K562 (cell line): ENCODE measurements at regions of chr7 and their contacts with region 1.

Region 1: DNA sequence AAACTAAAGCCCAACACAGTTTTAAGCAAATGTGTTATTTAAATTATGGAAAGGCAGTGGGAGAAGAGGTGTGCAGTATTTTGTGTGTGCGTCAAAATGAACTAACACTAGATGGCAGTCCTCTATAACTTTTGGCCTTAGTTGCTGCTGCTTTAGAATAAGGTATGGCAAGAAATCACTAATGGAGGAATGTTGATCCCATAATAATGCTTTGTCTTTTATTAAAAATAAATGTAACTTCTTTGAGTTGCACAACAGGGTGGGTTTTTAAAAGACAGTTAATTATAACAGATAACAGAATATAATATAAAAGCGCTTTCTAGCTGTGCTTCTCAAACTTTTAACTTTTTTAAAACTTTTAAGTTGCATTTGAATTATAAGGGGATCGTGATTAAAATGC is 56.4 kb downstream of the BBS9 start:
- DNase-seq: peak; percentile 23 to 64 (median 33)
- ATAC-seq: peak; percentile 90
- H3K4me3 ChIP-seq: no peak overlapping the region
- H3K27ac ChIP-seq: no peak overlapping the region
- H3K4me1 ChIP-seq: no peaks in the 10 kb centered on the region
- H3K27me3 ChIP-seq: no peaks in the 10 kb centered on the region
- CTCF ChIP-seq: peak; percentile 57 to 84 (median 71); a peak in 5 of 6 replicates
- EP300 ChIP-seq: no peak
- POLR2A ChIP-seq: no peak
- RAD21 ChIP-seq: peak; percentile 82 to 89

Region 2: GRCh38 chr7:32761451-32762205 is 424.2 kb before region 1 on chr7:
- CTCF ChIA-PET with region 1: no interaction called
- POLR2A ChIA-PET with region 1: no interaction called
- in situ Hi-C with region 1: no loop called
- intact Hi-C with region 1: loop called (anchors 10 kb)
- DNase-seq: no peak
- ATAC-seq: no peak
- H3K4me3 ChIP-seq: no peak overlapping the region
- H3K27ac ChIP-seq: no peak overlapping the region
- H3K4me1 ChIP-seq: peaks cover 0 to 3% of the 10 kb centered on the region in 2 experiments; a peak in 3 of 5 replicates
- H3K27me3 ChIP-seq: no peaks in the 10 kb centered on the region
- CTCF ChIP-seq: no peak
- EP300 ChIP-seq: no peak
- POLR2A ChIP-seq: no peak
- RAD21 ChIP-seq: no peak

Region 3: GRCh38 chr7:33243319-33243881 is 57.6 kb after region 1 on chr7:
- CTCF ChIA-PET with region 1: interaction called, 3 read pairs
- POLR2A ChIA-PET with region 1: no interaction called
- in situ Hi-C with region 1: no loop called
- intact Hi-C with region 1: loop called (anchors 5 kb)
- DNase-seq: peak; percentile 12 to 53 (median 32)
- ATAC-seq: peak; percentile 84
- H3K4me3 ChIP-seq: no peak overlapping the region
- H3K27ac ChIP-seq: no peak overlapping the region
- H3K4me1 ChIP-seq: no peaks in the 10 kb centered on the region
- H3K27me3 ChIP-seq: no peaks in the 10 kb centered on the region
- CTCF ChIP-seq: peak in 2 of 3 experiments; percentile 53 to 79; a peak in 4 of 6 replicates
- EP300 ChIP-seq: no peak
- POLR2A ChIP-seq: no peak
- RAD21 ChIP-seq: peak; percentile 66 to 81

Region 4: DNA sequence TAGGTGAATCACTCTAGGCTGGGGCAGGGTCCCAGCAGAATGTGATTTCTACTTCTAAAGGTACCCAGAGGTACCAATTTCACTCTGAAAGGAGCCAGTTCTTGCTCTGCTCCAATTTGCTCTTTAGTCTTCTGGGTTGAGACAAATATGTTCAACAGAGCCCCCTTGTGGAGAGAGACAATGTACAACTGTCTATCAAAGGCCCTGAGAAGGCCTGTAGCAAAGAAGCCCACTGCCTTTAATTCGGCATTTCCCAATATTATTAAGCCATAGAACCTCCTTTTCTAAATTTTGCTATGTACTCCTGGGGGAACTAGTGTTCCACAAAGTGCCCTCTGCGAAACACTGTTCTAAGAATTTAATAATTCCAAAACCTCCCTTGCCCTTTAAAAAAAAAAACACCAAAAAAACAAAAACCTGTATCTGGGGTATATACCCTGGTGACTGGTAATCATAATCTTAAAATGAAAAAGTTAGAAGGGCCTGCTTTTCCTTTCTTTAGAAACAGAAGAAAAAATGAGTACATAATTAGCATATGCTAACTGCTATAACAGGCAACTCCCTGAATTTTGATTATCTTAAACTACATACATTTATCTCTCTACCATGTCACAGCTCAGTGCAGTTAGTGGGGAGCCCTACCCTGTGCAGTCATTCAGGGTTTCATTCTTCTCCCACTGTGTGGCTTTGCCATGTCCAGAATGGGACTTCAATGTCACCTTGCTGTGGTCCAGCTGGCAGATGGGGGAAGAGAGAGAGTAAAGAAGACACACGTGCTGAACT is 558.7 kb after region 1 on chr7:
- CTCF ChIA-PET with region 1: no interaction called
- POLR2A ChIA-PET with region 1: no interaction called
- in situ Hi-C with region 1: no loop called
- intact Hi-C with region 1: loop called (anchors 10 kb)
- DNase-seq: peak; percentile 24 to 56 (median 44)
- ATAC-seq: peak; percentile 73; the same call in 2 of the 3 replicates
- H3K4me3 ChIP-seq: no peak overlapping the region
- H3K27ac ChIP-seq: no peak overlapping the region
- H3K4me1 ChIP-seq: no peaks in the 10 kb centered on the region
- H3K27me3 ChIP-seq: no peaks in the 10 kb centered on the region
- CTCF ChIP-seq: peak in 2 of 3 experiments; percentile 26 to 47; a peak in 2 of 6 replicates
- EP300 ChIP-seq: no peak
- POLR2A ChIP-seq: no peak
- RAD21 ChIP-seq: no peak

Region 5: GRCh38 chr7:33895025-33895804 is 709.4 kb after region 1 on chr7:
- CTCF ChIA-PET with region 1: no interaction called
- POLR2A ChIA-PET with region 1: no interaction called
- in situ Hi-C with region 1: no loop called
- intact Hi-C with region 1: loop called (anchors 10 kb)
- DNase-seq: peak; percentile 55 to 69 (median 62)
- ATAC-seq: peak; percentile 98
- H3K4me3 ChIP-seq: no peak overlapping the region
- H3K27ac ChIP-seq: no peak overlapping the region
- H3K4me1 ChIP-seq: no peaks in the 10 kb centered on the region
- H3K27me3 ChIP-seq: no peaks in the 10 kb centered on the region
- CTCF ChIP-seq: peak; percentile 67 to 78 (median 76)
- EP300 ChIP-seq: no peak
- POLR2A ChIP-seq: no peak
- RAD21 ChIP-seq: peak in 1 of 2 experiments; percentile 38; a peak in 3 of 4 replicates

Region 6: GRCh38 chr7:33921216-33921938 is 735.6 kb after region 1 on chr7:
- CTCF ChIA-PET with region 1: no interaction called
- POLR2A ChIA-PET with region 1: no interaction called
- in situ Hi-C with region 1: loop called (anchors 10 kb)
- intact Hi-C with region 1: no loop called
- DNase-seq: no peak
- ATAC-seq: no peak
- H3K4me3 ChIP-seq: no peak overlapping the region
- H3K27ac ChIP-seq: no peak overlapping the region
- H3K4me1 ChIP-seq: no peaks in the 10 kb centered on the region
- H3K27me3 ChIP-seq: no peaks in the 10 kb centered on the region
- CTCF ChIP-seq: no peak
- EP300 ChIP-seq: no peak
- POLR2A ChIP-seq: no peak
- RAD21 ChIP-seq: no peak

Region 7: GRCh38 chr7:33932832-33933468 is 747.2 kb after region 1 on chr7:
- CTCF ChIA-PET with region 1: interaction called, 6 read pairs
- POLR2A ChIA-PET with region 1: no interaction called
- in situ Hi-C with region 1: loop called (anchors 10 kb)
- intact Hi-C with region 1: loop called (anchors 1 kb)
- DNase-seq: peak; percentile 63 to 73 (median 71)
- ATAC-seq: peak; percentile 92
- H3K4me3 ChIP-seq: no peak overlapping the region
- H3K27ac ChIP-seq: no peak overlapping the region
- H3K4me1 ChIP-seq: no peaks in the 10 kb centered on the region
- H3K27me3 ChIP-seq: no peaks in the 10 kb centered on the region
- CTCF ChIP-seq: peak; percentile 78 to 93 (median 82)
- EP300 ChIP-seq: no peak
- POLR2A ChIP-seq: no peak
- RAD21 ChIP-seq: peak; percentile 63 to 69